ENCODE measurements at regions of chr12 and their contacts with region 1.

Region 1: DNA sequence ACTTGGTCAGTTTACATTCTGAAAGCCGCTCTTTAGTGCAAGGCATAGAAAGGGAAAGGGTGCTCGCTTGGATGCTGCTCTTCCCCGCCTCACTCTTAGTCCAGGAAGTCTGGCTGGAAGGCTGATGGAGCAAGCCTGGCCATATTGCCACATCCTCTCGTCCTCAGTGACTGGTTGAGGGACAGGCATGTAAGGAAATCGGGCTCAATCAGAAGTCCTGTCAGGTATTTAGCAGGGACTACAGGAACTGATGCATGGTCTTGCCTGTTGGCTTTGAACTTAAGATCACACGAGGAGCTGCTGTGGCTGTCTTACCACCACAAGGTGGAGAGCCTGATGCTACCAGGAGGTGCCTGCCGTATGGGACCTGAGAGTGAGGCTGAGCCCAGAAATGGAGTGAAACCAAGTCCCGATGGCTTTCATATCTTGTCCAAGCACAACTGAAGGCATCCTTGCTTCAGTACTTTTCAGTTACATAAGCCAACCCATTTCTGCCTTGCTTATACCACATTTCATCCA is 10.7 kb upstream of the C12orf75 start:
- DNase-seq: peak; percentile 53
- ATAC-seq: peak; percentile 80
- H3K4me3 Mint-ChIP-seq: no peak overlapping the region
- H3K27ac Mint-ChIP-seq: no peak overlapping the region
- H3K4me1 Mint-ChIP-seq: peaks cover 65% of the 10 kb centered on the region
- H3K27me3 Mint-ChIP-seq: no peaks in the 10 kb centered on the region

Region 2: DNA sequence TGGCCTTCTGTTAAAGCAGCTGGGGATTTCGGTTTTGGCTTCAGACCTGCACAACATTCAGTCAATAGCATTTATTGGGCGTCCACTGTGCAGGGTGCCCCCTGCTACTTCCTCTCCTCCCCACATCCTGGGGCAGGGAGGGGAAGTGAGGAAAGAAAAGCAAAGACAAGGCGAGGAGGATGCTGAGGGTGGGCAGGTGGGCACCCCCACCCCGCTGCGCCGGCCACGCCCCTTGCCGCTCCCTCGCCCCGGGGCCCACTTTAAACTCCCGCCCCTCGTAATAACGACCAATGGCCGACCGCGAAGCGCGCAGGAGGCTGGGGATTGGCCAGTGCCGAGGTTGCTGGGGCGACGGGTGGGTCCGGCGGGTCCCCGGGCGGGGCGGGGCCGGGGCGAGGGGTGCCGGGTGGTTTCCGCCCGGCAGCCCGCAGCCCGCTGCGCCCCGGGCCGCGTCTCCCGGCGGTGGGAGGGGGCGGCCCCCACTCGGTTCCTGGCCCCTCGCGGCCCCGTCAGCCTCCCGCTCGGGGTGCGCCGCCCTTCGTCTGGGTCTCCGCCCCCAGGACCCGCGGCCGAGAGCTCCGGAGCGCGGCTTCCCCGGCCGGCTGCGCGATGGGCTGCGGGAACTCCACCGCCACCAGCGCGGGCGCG is 10.7 kb after region 1 on chr12 and contains the start of gene C12orf75:
- CTCF ChIA-PET with region 1: interaction called, 36 read pairs
- POLR2A ChIA-PET with region 1: interaction called, 8 read pairs
- DNase-seq: peak; percentile 96
- ATAC-seq: peak; percentile 87
- H3K4me3 Mint-ChIP-seq: peak within 1 kb of the TSS; percentile 91
- H3K27ac Mint-ChIP-seq: peak within 1 kb of the TSS; percentile 91
- H3K4me1 Mint-ChIP-seq: peaks cover 76% of the 10 kb centered on the region
- H3K27me3 Mint-ChIP-seq: no peaks in the 10 kb centered on the region
- total RNA-seq, gene C12orf75: 301 to 311 TPM

Region 3: DNA sequence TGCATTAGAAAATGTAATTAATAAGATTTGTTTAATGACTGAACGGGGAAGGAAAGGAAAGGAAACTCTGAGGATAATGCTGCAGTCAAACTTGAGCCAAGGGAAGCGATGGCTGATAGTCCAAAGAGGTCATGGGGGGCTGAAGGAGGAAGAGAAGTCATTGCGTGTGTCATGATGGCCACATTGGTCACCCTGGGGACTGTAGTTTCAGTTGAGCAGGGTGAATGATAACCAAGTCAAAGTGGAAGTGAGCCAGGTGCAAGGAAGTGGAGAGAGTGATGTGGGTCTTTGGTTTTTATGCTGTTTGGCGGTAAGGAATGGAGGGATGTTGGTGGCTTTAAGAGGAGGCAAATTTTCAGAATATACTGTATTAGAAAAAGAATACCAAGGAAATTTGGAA is 32.3 kb after region 1 on chr12:
- CTCF ChIA-PET with region 1: interaction called, 16 read pairs
- POLR2A ChIA-PET with region 1: no interaction called
- DNase-seq: peak; percentile 57
- ATAC-seq: peak; percentile 71
- H3K4me3 Mint-ChIP-seq: peak overlapping the region; percentile 31
- H3K27ac Mint-ChIP-seq: peak overlapping the region; percentile 79
- H3K4me1 Mint-ChIP-seq: peaks cover 80% of the 10 kb centered on the region
- H3K27me3 Mint-ChIP-seq: no peaks in the 10 kb centered on the region

Region 4: GRCh38 chr12:105357162-105357691 is 37.5 kb after region 1 on chr12:
- CTCF ChIA-PET with region 1: interaction called, 16 read pairs
- POLR2A ChIA-PET with region 1: no interaction called
- DNase-seq: no peak
- ATAC-seq: peak; percentile 74
- H3K4me3 Mint-ChIP-seq: peak overlapping the region; percentile 57
- H3K27ac Mint-ChIP-seq: peak overlapping the region; percentile 91
- H3K4me1 Mint-ChIP-seq: peaks cover 71% of the 10 kb centered on the region
- H3K27me3 Mint-ChIP-seq: no peaks in the 10 kb centered on the region

Region 5: DNA sequence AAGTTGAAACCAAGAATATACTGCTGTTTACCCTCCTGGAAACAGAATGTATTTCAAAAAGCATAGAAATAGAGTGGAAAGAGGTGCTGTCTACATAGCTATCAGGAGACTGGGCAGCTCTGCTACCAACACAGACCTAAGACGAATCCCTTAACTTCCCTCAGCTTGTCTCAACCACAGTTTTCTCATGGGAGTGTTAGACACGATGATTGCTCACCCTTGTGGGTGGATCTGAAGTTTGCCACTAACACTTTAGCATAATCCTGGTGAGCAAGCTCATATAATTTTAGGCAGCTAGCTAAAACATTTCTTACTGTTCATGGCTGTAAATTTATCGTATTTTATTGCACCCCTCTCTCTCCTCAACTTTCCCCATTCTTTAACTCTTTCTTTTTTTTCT is 49.3 kb after region 1 on chr12:
- CTCF ChIA-PET with region 1: interaction called, 17 read pairs
- POLR2A ChIA-PET with region 1: no interaction called
- DNase-seq: no peak
- ATAC-seq: no peak
- H3K4me3 Mint-ChIP-seq: no peak overlapping the region
- H3K27ac Mint-ChIP-seq: no peak overlapping the region
- H3K4me1 Mint-ChIP-seq: peaks cover 5% of the 10 kb centered on the region
- H3K27me3 Mint-ChIP-seq: no peaks in the 10 kb centered on the region

Region 6: DNA sequence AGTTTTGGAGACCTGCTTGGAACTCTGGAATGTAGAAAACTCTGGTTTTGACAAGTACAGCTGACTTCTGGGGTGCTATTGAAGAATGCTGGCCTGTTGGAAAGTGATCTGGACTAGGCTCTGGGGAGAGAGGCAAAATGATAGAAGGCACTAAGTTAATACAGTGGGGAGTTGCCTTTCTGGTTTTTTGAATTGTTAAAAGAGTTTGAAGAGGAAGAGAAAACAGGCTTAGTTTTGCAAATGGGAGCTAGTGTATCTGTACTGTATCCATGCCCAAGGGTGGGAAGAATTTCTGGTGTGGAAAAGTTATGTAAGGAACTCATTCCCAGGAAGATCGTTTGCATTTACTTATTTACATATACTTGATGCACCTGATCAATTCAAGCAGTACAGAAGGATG is 54.6 kb after region 1 on chr12:
- CTCF ChIA-PET with region 1: interaction called, 19 read pairs
- POLR2A ChIA-PET with region 1: no interaction called
- DNase-seq: no peak
- ATAC-seq: no peak
- H3K4me3 Mint-ChIP-seq: no peak overlapping the region
- H3K27ac Mint-ChIP-seq: no peak overlapping the region
- H3K4me1 Mint-ChIP-seq: peaks cover 2% of the 10 kb centered on the region
- H3K27me3 Mint-ChIP-seq: no peaks in the 10 kb centered on the region

Region 7: DNA sequence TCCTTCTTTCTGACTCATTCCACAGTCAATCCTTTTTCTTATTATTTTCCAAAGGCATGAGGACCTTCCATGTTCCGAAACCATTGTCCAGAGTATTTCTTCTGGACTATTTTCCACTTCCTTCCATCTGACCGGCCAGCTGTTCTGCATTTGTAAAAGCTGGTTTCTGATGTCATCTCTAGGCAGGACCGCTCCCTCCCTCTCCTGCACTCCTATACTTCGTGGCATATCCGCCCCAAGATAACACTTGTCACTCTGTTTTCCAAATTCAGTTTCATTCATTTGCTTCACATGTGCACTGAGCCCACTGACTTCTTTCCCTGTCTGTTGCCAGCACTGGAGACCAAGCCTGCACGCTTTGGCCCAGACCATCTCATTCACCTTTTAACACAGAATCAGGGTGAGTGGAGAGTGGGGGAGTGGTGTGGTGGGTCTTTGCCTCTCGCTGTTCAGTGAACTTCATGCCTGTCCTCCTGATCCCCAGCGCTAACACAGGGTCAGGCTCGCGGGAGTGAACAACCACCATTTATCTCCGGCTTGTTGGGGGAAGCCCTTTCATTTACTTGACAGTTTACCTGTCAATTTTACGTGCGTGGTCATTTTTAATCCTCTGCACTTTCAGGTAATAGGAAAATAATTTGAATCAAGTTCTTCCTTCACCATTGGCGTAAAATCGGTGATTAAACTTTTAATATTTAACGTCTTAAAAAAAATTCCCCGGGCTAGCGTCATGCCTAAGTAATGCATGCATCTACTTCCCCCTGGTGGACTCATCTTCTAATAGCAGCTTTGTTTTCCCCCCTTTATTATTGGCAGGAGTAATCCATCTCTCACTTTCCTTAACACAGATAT is 63.2 kb after region 1 on chr12:
- CTCF ChIA-PET with region 1: interaction called, 24 read pairs
- POLR2A ChIA-PET with region 1: interaction called, 6 read pairs
- DNase-seq: peak; percentile 50
- ATAC-seq: no peak
- H3K4me3 Mint-ChIP-seq: no peak overlapping the region
- H3K27ac Mint-ChIP-seq: no peak overlapping the region
- H3K4me1 Mint-ChIP-seq: no peaks in the 10 kb centered on the region
- H3K27me3 Mint-ChIP-seq: no peaks in the 10 kb centered on the region